Psoas muscle (tissue), 8 donors: ENCODE measurements at regions of chr19 and their contacts with region 1.

Region 1: DNA sequence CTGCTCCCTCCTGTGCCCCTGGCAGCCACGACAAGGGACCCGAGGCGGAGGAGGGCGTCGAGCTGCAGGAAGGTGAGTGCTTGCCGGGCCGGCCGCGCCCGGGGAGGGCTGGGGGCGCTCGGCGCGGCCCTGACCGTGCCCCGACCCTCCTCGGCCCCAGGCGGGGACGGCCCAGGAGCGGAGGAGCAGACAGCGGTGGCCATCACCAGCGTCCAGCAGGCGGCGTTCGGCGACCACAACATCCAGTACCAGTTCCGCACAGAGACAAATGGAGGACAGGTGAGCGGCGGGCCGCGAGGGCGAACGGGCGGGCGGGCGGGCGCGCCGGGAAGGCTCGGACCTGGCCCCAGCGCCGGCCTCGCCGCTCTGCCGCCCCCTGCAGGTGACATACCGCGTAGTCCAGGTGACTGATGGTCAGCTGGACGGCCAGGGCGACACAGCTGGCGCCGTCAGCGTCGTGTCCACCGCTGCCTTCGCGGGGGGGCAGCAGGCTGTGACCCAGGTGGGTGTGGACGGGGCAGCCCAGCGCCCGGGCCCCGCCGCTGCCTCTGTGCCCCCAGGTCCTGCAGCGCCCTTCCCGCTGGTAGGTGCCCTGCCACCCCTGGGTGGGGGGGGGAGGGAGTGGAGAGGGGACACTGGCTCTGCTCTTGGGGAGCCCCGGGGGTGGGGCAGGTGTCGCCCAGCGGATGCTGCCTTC is 807 bp downstream of the USF2 start:
- DNase-seq: peak; percentile 88 to 95
- ATAC-seq: peak; percentile 69 to 80 (median 74)
- H3K4me3 ChIP-seq: peak overlapping the region; percentile 78
- H3K27ac ChIP-seq: peak overlapping the region; percentile 93
- H3K4me1 ChIP-seq: peaks cover 25% of the 10 kb centered on the region
- H3K27me3 ChIP-seq: no peaks in the 10 kb centered on the region
- CTCF ChIP-seq: peak; percentile 89

Region 2: DNA sequence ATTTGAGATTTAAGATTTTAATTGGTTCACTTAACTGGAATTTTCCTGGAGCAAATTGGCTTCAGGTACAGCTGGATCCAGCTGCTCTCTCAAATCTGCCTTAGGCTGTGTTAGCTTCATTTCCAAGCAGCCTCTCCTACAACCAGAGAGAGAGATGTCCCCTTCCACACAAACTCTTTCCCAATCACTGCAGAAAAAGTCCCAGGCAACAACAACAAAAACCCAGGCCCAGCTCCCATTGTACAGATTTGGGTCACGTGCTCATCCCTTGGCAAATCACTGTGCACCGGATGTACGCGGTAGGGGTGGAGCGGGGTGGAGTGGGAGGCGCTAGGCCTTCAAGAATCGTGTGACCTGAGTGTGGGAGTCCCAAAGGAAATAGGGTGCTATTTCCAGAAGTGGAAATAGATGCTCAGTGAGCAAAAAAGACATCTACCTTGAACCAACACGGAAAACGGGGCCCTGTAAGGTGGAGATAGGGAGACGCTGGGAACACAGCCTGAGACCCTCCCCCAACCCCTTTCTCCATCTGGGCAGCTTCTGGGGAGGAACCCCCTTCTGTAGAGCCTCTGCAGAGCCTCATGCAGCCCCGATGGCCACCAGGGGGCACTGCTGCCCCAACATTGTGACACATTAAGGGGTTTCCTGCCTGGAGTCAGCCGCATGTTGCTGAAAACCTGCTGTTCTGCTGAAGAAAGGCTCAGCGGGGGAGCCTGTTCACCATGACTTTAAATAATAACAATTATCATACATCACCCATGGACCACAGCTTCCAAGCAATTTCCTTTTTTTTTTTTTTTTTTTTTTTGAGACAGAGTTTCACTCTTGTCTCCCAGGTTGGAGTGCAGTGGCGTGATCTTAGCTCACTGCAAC is 202.6 kb before region 1 on chr19:
- intact Hi-C with region 1: loop called in 1 of 2 experiments (anchors 10 kb)
- DNase-seq: peak; percentile 87 to 94
- ATAC-seq: peak; percentile 84 to 90 (median 88)
- H3K4me3 ChIP-seq: no peak overlapping the region
- H3K27ac ChIP-seq: no peak overlapping the region
- H3K4me1 ChIP-seq: peaks cover 2% of the 10 kb centered on the region
- H3K27me3 ChIP-seq: no peaks in the 10 kb centered on the region
- CTCF ChIP-seq: peak; percentile 92

Region 3: DNA sequence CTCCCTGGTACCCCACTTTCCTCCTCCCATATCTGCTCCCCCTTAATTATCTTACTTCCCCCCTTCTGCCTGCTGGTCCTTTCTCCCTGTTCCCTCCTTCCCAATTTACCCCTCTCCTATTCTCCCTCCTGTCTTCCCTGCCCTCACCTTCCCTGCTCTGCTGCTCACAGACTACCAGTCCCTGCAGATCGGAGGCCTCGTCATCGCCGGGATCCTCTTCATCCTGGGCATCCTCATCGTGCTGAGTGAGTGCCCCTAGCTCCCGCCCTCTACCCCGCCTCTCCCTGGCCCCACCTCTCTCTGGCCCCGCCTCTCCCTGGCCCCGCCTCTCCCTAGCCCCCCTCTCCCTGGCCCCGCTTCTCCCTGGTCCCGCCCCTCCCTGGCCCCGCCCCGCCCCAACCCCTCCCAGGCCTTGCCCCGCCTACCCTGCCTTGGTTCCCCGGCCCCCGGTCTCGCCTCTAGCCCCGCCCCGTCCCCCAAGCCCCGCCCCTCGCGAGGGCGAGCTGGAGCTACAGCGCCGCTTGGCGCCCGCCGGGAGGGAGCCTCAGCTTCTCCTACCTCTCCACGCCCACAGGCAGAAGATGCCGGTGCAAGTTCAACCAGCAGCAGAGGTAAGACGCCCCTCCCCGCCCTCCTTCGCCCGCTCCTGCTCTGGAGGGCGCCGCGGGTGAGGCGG is 128.5 kb before region 1 on chr19:
- intact Hi-C with region 1: loop called (anchors 5 to 10 kb)
- DNase-seq: peak; percentile 95 to 98
- ATAC-seq: peak; percentile 68 to 86 (median 72)
- H3K4me3 ChIP-seq: peak overlapping the region; percentile 69
- H3K27ac ChIP-seq: peak overlapping the region; percentile 97
- H3K4me1 ChIP-seq: peaks cover 21% of the 10 kb centered on the region
- H3K27me3 ChIP-seq: no peaks in the 10 kb centered on the region
- CTCF ChIP-seq: peak; percentile 35

Region 4: GRCh38 chr19:35495107-35496064 is 225.8 kb after region 1 on chr19:
- intact Hi-C with region 1: loop called in 1 of 2 experiments (anchors 10 kb)
- DNase-seq: peak; percentile 57 to 78
- ATAC-seq: peak; percentile 79 to 91 (median 85)
- H3K4me3 ChIP-seq: no peak overlapping the region
- H3K27ac ChIP-seq: no peak overlapping the region
- H3K4me1 ChIP-seq: peaks cover 3% of the 10 kb centered on the region
- H3K27me3 ChIP-seq: peaks cover 0 to 4% (median 0%) of the 10 kb centered on the region in 3 donors
- CTCF ChIP-seq: peak; percentile 89